ENCODE measurements at regions of chr19 and their contacts with region 1.

Region 1: DNA sequence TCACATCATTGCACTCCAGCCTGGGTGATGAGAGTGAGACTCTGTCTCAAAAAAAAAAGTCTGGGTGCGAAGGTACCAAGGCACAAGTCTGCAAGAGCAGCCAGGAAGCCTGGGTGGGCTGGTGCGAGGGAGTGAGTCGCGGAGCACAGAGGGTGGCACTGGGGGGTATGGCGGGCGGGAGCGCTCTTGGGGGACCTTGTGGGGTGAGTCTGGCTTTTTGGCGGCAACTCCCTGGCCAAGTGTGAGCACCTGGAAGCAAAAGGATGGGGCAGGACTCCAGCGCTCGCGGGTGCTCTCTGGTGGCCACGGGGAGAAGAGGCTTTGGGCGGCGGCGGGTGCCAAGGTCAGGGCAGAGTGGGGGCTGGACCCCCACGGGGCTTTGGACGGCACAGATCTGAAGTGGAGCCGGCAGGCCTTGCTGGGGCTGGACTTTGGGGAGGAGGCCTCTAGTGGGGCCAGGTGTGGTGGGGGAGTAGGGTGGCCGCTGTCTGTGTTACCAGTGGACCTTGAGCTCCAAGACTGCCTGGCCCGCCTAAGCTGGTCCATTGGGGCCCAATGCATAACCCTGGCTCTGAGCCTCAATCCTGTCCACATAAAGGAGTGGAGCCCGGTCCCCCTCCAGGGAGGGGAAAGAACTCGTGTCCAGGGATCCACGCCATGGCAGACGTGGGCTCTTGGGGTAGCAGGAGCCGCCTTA is 1.6 kb downstream of the P2RY11 start:
- DNase-seq: peak; percentile 80
- ATAC-seq: peak; percentile 32
- H3K4me3 Mint-ChIP-seq: peak overlapping the region; percentile 85
- H3K27ac Mint-ChIP-seq: peak overlapping the region; percentile 97
- H3K4me1 Mint-ChIP-seq: peaks cover 54% of the 10 kb centered on the region
- H3K27me3 Mint-ChIP-seq: no peaks in the 10 kb centered on the region
- CTCF ChIP-seq: peak; percentile 70

Region 2: GRCh38 chr19:9934132-9934950 is 178.7 kb before region 1 on chr19:
- CTCF ChIA-PET with region 1: interaction called, 14 read pairs
- POLR2A ChIA-PET with region 1: interaction called, 4 read pairs
- intact Hi-C with region 1: no loop called
- DNase-seq: peak; percentile 93
- ATAC-seq: peak; percentile 95
- H3K4me3 Mint-ChIP-seq: no peak overlapping the region
- H3K27ac Mint-ChIP-seq: no peak overlapping the region
- H3K4me1 Mint-ChIP-seq: peaks cover 24% of the 10 kb centered on the region
- H3K27me3 Mint-ChIP-seq: peaks cover 49% of the 10 kb centered on the region
- CTCF ChIP-seq: peak; percentile 96

Region 3: DNA sequence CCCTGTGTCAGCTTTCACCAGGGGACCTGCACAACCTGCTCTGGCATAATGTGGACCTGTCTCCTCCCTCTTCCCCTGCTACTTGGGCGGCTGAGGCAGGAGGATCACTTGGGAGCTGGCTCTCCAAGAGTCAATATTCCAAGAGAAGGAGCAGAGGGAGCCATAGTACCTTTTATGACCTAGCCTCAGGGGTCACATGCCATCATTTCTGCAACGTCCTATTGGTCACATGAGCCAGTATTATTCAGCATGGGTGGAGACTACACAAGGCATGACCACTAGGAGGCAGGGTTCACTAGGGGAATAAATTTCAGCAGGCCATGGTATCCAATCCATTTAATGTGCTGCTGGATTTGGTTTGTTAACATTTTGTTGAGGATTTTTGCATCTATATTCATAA is 38.9 kb before region 1 on chr19:
- CTCF ChIA-PET with region 1: interaction called, 3 read pairs
- POLR2A ChIA-PET with region 1: interaction called, 5 read pairs
- intact Hi-C with region 1: loop called (anchors 2 kb)
- DNase-seq: peak; percentile 71
- ATAC-seq: peak; percentile 88
- H3K4me3 Mint-ChIP-seq: no peak overlapping the region
- H3K27ac Mint-ChIP-seq: no peak overlapping the region
- H3K4me1 Mint-ChIP-seq: no peaks in the 10 kb centered on the region
- H3K27me3 Mint-ChIP-seq: peaks cover 3% of the 10 kb centered on the region
- CTCF ChIP-seq: peak; percentile 57

Region 4: DNA sequence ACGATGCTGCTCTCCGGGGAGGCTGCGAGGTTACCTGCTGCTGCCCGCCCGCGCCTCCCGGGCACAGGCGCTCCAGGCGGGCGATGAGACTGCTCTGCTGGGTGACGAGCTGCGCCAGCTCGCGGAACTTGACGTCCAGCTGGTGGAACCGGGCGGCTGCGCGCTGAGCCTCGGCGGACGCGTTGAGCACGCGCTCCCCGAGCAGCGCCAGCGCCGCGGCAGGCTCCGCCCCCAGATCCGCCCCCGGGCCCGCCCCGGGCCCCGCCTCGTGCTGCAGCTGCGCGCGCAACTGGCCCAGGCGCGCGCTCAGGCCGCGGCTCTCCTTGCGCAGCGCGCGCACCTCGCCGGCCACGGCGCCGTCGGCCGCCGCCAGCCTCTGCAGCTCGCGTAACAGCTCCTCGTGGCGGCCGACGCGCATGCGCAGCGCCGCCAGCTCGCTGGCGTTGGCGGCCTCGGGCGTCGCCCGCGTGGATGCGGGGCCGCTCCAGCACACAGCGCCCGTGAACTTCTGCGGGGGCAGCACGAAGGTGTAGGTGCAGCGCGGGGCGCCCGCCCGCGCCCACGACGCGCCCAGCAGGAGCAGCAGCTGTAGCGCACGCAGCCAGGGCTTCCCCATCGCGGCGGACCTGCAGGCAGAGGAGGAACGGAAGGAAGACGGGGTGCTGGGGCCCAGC is 17.0 kb before region 1 on chr19:
- CTCF ChIA-PET with region 1: interaction called, 128 read pairs
- POLR2A ChIA-PET with region 1: interaction called, 521 read pairs
- intact Hi-C with region 1: no loop called
- DNase-seq: peak; percentile 88
- ATAC-seq: peak; percentile 95
- H3K4me3 Mint-ChIP-seq: peak overlapping the region; percentile 60
- H3K27ac Mint-ChIP-seq: peak overlapping the region; percentile 81
- H3K4me1 Mint-ChIP-seq: peaks cover 20% of the 10 kb centered on the region
- H3K27me3 Mint-ChIP-seq: no peaks in the 10 kb centered on the region
- CTCF ChIP-seq: no peak

Region 5: GRCh38 chr19:10126213-10126639 is 13.2 kb after region 1 on chr19:
- CTCF ChIA-PET with region 1: interaction called, 14 read pairs
- POLR2A ChIA-PET with region 1: interaction called, 521 read pairs
- intact Hi-C with region 1: no loop called
- DNase-seq: no peak
- ATAC-seq: no peak
- H3K4me3 Mint-ChIP-seq: no peak overlapping the region
- H3K27ac Mint-ChIP-seq: no peak overlapping the region
- H3K4me1 Mint-ChIP-seq: no peaks in the 10 kb centered on the region
- H3K27me3 Mint-ChIP-seq: no peaks in the 10 kb centered on the region
- CTCF ChIP-seq: no peak

Region 6: DNA sequence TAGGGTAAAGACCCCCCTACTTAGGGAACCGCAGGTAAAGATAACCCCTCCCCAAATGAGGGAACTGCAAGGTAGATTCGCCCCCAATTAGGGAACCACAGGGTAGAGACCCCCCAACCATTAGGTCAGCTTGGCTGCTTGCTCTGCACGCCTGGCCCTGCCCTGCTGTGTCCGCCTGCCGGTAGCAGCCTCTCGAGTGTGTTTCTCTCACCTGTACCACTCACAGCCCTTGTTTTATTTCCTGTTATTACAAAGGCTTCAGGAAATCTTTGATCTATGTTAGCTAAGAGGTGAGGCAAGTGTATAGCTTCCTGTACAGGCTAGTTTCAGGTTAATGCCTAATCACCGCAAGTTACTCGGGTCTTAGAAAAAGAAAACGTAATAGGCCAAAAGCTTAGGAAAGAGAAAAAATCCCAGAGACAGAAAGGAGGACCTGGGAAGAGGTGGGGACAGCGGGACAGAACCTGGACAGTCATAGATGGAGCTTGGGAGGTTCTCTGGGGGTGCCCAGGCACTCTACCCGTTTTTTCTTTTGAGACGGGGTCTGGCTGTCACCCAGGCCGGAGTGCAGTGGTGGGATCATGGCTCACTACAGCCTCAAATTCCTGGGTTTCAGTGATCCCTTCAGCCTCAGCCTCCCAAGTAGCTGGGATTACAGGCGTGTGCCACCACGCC is 29.8 kb after region 1 on chr19:
- CTCF ChIA-PET with region 1: no interaction called
- POLR2A ChIA-PET with region 1: interaction called, 15 read pairs
- intact Hi-C with region 1: no loop called
- DNase-seq: peak; percentile 53
- ATAC-seq: peak; percentile 87
- H3K4me3 Mint-ChIP-seq: peak overlapping the region; percentile 31
- H3K27ac Mint-ChIP-seq: peak overlapping the region; percentile 86
- H3K4me1 Mint-ChIP-seq: peaks cover 34% of the 10 kb centered on the region
- H3K27me3 Mint-ChIP-seq: no peaks in the 10 kb centered on the region
- CTCF ChIP-seq: no peak

Region 7: DNA sequence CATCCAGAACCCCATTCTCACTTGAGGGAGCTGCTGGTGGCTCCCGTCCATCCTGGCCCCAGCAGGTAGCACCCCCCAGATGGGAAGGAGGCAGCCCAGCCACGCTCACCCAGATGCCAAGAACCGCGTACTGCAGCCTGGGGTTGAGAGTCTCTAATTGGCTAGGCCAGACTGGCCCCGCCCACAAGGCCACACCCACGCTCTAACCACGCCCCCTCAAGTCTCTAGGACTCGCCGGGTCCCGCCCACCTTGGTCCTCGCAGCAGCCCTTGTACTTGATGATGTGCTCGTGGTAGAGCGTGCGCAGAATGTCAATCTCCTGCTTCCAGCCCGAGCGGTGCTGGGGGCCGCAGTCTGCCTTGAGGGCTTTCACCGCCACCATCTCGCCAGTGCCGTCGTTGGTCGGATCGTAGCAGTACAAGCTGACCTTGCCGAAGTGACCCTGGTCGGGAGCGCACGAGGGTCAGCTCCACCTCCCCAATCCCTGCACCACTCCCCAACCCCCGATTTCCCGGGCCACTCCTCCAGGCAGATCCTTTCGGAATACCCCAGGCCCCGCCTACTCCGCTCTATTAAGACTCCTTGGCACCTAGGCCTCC is 240.8 kb after region 1 on chr19:
- CTCF ChIA-PET with region 1: no interaction called
- POLR2A ChIA-PET with region 1: no interaction called
- intact Hi-C with region 1: no loop called
- DNase-seq: peak; percentile 71
- ATAC-seq: peak; percentile 80
- H3K4me3 Mint-ChIP-seq: no peak overlapping the region
- H3K27ac Mint-ChIP-seq: no peak overlapping the region
- H3K4me1 Mint-ChIP-seq: no peaks in the 10 kb centered on the region
- H3K27me3 Mint-ChIP-seq: no peaks in the 10 kb centered on the region
- CTCF ChIP-seq: no peak